Motor neuron (in vitro differentiated cells): ENCODE measurements at regions of chrX and their contacts with region 1.

Region 1: DNA sequence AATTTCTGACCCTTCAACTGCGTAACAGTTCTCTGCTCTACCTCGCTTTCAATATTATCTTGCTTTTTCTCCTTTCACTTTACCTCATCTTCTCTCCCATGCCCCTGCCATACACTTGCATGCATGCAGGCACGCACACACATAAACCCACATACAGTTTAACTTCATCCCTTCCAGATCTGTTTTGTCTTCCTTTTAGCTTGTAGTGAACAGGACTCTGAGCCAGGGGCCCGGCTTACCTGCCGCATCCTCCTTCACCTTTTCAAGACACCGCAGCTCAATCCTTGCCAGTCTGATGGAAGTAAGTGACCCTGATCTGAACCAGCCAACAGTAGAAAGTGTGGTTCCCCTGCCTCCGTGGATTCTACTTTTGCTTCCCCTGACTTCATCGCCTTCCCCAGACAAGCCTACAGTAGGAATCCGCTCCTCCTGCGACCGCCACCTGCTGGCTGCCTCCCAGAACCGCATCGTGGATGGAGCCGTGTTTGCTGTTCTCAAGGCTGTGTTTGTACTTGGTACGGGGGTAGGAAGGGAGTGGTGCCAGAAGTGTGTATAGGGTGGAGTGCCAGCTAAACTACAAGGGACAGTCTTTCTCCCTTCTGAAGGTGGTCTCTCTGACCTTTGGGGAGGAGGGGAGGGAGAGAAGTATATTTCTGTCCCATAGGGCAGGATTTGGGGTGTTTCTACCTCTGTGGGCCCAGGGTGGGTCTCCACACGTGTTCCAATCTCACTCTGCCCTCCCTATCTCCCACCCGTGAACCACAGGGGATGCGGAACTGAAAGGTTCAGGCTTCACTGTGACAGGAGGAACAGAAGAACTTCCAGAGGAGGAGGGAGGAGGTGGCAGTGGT is 10.7 kb downstream of the MED12 start:
- ATAC-seq: peak; percentile 58 to 90 (median 80)
- H3K4me3 ChIP-seq: no peak overlapping the region
- H3K27ac ChIP-seq: no peak overlapping the region
- H3K4me1 ChIP-seq: no peaks in the 10 kb centered on the region

Region 2: GRCh38 chrX:70998411-70999027 is 130.6 kb before region 1 on chrX:
- in situ Hi-C with region 1: loop called in 1 of 9 experiments (anchors 25 kb)
- ATAC-seq: peak in 4 of 8 experiments; percentile 44 to 67 (median 58)
- H3K4me3 ChIP-seq: no peak overlapping the region
- H3K27ac ChIP-seq: no peak overlapping the region
- H3K4me1 ChIP-seq: peaks cover 0 to 3% of the 10 kb centered on the region in 2 donors

Region 3: DNA sequence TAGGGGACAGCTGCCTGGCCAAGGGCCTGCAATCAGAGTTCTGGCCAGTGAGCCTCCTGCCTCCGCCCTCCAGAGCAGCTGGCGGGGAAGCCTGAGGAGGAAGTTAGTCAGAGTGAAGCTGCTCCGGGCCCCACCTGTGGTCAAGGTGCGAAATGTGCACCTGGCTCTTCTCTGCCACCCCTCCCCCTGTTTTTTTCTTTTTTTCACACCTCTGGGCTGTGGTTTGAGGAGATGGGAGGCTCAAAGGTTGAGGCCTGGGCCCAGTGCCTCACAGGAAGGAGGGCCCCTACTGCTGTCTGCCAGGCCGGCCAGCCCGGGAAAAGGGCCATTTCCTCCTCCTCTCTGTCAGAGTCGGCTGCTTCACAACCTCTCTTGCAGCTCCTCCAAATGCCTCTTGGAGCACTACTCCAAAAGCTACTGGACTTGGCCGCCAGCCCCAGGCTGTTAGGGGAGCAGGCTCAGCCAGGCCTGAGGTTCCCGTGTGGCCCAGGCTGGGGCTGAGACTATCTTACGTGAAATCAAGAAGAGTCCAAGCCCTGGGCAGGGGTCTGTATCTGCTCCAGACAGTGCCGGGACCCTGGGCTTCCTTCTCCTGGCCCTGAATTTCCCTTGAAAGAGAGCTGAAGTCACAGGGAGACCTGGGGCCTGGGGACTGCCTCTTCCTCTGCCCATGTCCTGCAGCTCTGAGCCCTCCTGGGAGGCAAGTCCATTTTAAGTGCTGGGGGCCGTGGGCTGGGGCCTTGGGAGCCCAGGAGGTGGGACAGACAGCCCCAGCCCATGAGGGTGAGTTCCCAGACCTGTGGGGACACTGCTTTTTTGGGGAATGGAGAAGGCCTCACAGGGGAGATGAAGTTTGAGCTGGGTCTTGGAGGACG is 493.7 kb after region 1 on chrX:
- in situ Hi-C with region 1: no loop called
- ATAC-seq: peak in 4 of 8 experiments; percentile 37 to 81 (median 49)
- H3K4me3 ChIP-seq: no peak overlapping the region
- H3K27ac ChIP-seq: no peak overlapping the region
- H3K4me1 ChIP-seq: no peaks in the 10 kb centered on the region